ENCODE measurements at regions of chr2 and their contacts with region 1.

Region 1: GRCh38 chr2:230219419-230220331 is at the start of gene SP110:
- DNase-seq: peak; percentile 96
- H3K4me3 Mint-ChIP-seq: peak within 1 kb of the TSS; percentile 98
- H3K27ac Mint-ChIP-seq: peak within 1 kb of the TSS; percentile 98
- H3K4me1 Mint-ChIP-seq: peaks cover 66% of the 10 kb centered on the region
- H3K27me3 Mint-ChIP-seq: no peaks in the 10 kb centered on the region
- total RNA-seq, gene SP110: 137 and 148 TPM in 2 replicates

Region 2: GRCh38 chr2:230205034-230205433 is 14.6 kb before region 1 on chr2:
- intact Hi-C with region 1: loop called (anchors 2 kb)
- DNase-seq: no peak
- H3K4me3 Mint-ChIP-seq: no peak overlapping the region
- H3K27ac Mint-ChIP-seq: peak overlapping the region; percentile 6
- H3K4me1 Mint-ChIP-seq: peaks cover 26% of the 10 kb centered on the region
- H3K27me3 Mint-ChIP-seq: no peaks in the 10 kb centered on the region

Region 3: GRCh38 chr2:230234845-230235244 is 15.2 kb after region 1 on chr2:
- intact Hi-C with region 1: loop called (anchors 2 kb)
- DNase-seq: peak; percentile 57
- H3K4me3 Mint-ChIP-seq: peak overlapping the region; percentile 78
- H3K27ac Mint-ChIP-seq: peak overlapping the region; percentile 97
- H3K4me1 Mint-ChIP-seq: peaks cover 44% of the 10 kb centered on the region
- H3K27me3 Mint-ChIP-seq: no peaks in the 10 kb centered on the region

Region 4: GRCh38 chr2:230326453-230327417 is 107.1 kb after region 1 on chr2 and contains the start of gene SP140L:
- intact Hi-C with region 1: loop called (anchors 2 kb)
- DNase-seq: peak; percentile 94
- H3K4me3 Mint-ChIP-seq: peak within 1 kb of the TSS; percentile 92
- H3K27ac Mint-ChIP-seq: peak within 1 kb of the TSS; percentile 90
- H3K4me1 Mint-ChIP-seq: peaks cover 67% of the 10 kb centered on the region
- H3K27me3 Mint-ChIP-seq: no peaks in the 10 kb centered on the region
- total RNA-seq, gene SP140L: 48.9 and 49.1 TPM in 2 replicates

Measured in activated CD4-positive, alpha-beta T cell treated with anti-CD3 and anti-CD28 coated beads, Interleukin-2, amount 10 ng/mL, durations not matched to agents 24 days and 14 days (primary cell).